IMR-90 (cell line): ENCODE measurements at regions of chr12 and their contacts with region 1.

Region 1: GRCh38 chr12:92561543-92561899 is 141.3 kb upstream of the PLEKHG7 start:
- DNase-seq: peak; percentile 91
- ATAC-seq: peak; percentile 88
- H3K4me3 ChIP-seq: no peak overlapping the region
- H3K27ac ChIP-seq: no peak overlapping the region
- H3K4me1 ChIP-seq: peaks cover 5% of the 10 kb centered on the region
- H3K27me3 ChIP-seq: no peaks in the 10 kb centered on the region
- CTCF ChIP-seq: no peak
- POLR2A ChIP-seq: no peak
- RAD21 ChIP-seq: no peak

Region 2: GRCh38 chr12:91388552-91388965 is 1173.0 kb before region 1 on chr12:
- CTCF ChIA-PET with region 1: no interaction called
- POLR2A ChIA-PET with region 1: no interaction called
- dilution Hi-C with region 1: no loop called
- in situ Hi-C with region 1: loop called (anchors 5 kb)
- intact Hi-C with region 1: no loop called
- DNase-seq: no peak
- ATAC-seq: no peak
- H3K4me3 ChIP-seq: no peak overlapping the region
- H3K27ac ChIP-seq: no peak overlapping the region
- H3K4me1 ChIP-seq: no peaks in the 10 kb centered on the region
- H3K27me3 ChIP-seq: peaks cover 15% of the 10 kb centered on the region
- CTCF ChIP-seq: no peak
- POLR2A ChIP-seq: no peak
- RAD21 ChIP-seq: no peak

Region 3: GRCh38 chr12:92297932-92298696 is 263.4 kb before region 1 on chr12:
- CTCF ChIA-PET with region 1: no interaction called
- POLR2A ChIA-PET with region 1: no interaction called
- dilution Hi-C with region 1: no loop called
- in situ Hi-C with region 1: no loop called
- intact Hi-C with region 1: loop called (anchors 10 kb)
- DNase-seq: peak; percentile 80
- ATAC-seq: peak; percentile 55
- H3K4me3 ChIP-seq: no peak overlapping the region
- H3K27ac ChIP-seq: peak overlapping the region; percentile 79
- H3K4me1 ChIP-seq: peaks cover 14% of the 10 kb centered on the region
- H3K27me3 ChIP-seq: no peaks in the 10 kb centered on the region
- CTCF ChIP-seq: no peak
- POLR2A ChIP-seq: no peak
- RAD21 ChIP-seq: no peak